ENCODE measurements at regions of chr14 and their contacts with region 1.

Region 1: DNA sequence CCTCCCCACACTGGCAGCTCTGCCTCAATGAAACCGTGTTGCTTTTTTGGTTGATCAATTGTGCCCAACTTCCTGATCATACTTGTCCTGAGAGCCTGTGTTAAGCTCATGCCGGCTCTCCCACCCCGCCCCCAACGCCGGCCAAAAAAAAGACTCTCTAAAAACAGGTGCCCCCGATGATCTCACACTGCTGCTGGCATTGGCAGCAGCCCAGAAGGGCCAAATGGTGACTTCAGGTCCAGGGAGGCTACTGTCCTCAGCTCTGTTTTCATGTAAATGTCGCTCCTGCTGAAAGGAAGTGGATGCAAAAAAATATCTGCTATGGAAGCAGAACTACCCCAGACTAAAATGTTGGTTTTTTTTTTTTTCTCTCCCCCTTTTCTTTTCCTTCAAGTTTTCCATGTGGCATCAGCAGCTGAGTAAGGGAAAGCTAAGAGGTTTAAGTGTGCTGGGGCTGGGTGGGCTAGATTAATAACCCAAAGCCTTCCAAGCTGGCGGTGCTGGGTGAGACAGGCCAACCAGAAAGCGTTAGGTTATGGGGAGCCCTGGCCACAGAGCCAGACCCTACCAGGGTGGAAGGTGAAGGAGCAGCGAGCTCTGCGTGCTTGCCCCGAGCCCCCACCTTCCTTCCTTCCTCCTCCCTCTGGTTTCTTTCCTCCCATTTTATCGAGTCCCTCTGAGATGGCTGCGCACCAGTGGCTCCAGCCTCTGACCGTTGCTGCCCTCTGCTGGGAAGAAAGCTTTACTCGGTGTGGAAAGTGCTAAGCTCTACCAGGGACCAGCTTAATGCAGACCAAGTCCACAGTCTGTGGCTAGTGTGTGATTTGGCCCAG is 396.1 kb downstream of the NRXN3 start:
- DNase-seq: peak; percentile 9
- H3K4me3 ChIP-seq: peak overlapping the region; percentile 29; the same call in 1 of the 2 replicates
- H3K27me3 ChIP-seq: no peaks in the 10 kb centered on the region
- CTCF ChIP-seq: peak; percentile 88

Region 2: GRCh38 chr14:78581229-78581628 is 15.0 kb after region 1 on chr14:
- CTCF ChIA-PET with region 1: interaction called, 60 read pairs
- POLR2A ChIA-PET with region 1: no interaction called
- DNase-seq: no peak
- H3K4me3 ChIP-seq: no peak overlapping the region
- H3K27me3 ChIP-seq: no peaks in the 10 kb centered on the region
- CTCF ChIP-seq: no peak

Region 3: GRCh38 chr14:78714711-78715110 is 148.5 kb after region 1 on chr14:
- CTCF ChIA-PET with region 1: no interaction called
- POLR2A ChIA-PET with region 1: no interaction called
- DNase-seq: no peak
- H3K4me3 ChIP-seq: no peak overlapping the region
- H3K27me3 ChIP-seq: no peaks in the 10 kb centered on the region
- CTCF ChIP-seq: no peak

Region 4: GRCh38 chr14:78848234-78848820 is 282.1 kb after region 1 on chr14:
- CTCF ChIA-PET with region 1: no interaction called
- POLR2A ChIA-PET with region 1: no interaction called
- DNase-seq: no peak
- H3K4me3 ChIP-seq: no peak overlapping the region
- H3K27me3 ChIP-seq: no peaks in the 10 kb centered on the region
- CTCF ChIP-seq: peak; percentile 80

Region 5: DNA sequence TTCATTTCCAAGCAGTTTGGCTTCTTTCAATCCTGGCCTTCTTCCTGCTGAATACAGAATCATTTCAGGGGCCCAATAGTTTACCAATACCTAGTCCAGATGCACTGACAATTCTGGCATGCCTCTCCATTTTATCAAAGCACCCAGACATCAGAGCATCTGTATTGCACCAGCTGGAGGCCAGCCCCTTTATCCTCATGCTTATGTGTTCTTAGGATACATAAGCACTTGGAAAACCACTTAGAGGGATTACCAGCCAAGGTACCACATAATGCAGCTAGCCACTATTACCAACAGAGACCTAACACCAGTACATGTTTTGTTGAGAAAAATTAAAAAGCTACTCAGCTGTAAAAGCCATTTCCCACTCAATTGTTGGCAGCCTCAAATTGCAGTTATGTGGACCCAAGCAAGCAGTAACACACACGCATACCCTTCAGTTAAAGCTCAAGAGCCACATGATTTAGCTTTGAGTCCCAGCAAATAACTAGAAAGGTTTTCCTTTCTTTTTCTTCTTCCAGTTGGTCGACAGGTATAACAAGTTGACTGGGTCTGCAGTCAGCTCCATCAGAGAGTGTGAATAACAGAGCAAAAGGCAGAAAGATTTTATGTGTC is 1381.3 kb after region 1 on chr14:
- CTCF ChIA-PET with region 1: no interaction called
- POLR2A ChIA-PET with region 1: no interaction called
- DNase-seq: no peak
- H3K4me3 ChIP-seq: no peak overlapping the region
- H3K27me3 ChIP-seq: no peaks in the 10 kb centered on the region
- CTCF ChIP-seq: no peak